CD4-positive, alpha-beta T cell (primary cell): ENCODE measurements at regions of chr15 and their contacts with region 1.

Region 1: GRCh38 chr15:101303408-101303807 is 8.4 kb upstream of the SNRPA1 start:
- DNase-seq: no peak
- ATAC-seq: no peak
- H3K4me3 ChIP-seq: no peak overlapping the region
- H3K4me3 Mint-ChIP-seq: no peak overlapping the region
- H3K27ac ChIP-seq: no peak overlapping the region
- H3K27ac Mint-ChIP-seq: no peak overlapping the region
- H3K4me1 ChIP-seq: no peaks in the 10 kb centered on the region
- H3K4me1 Mint-ChIP-seq: no peaks in the 10 kb centered on the region
- H3K27me3 ChIP-seq: peaks cover 0 to 1% of the 10 kb centered on the region in 2 experiments
- H3K27me3 Mint-ChIP-seq: no peaks in the 10 kb centered on the region
- CTCF ChIP-seq: no peak

Region 2: DNA sequence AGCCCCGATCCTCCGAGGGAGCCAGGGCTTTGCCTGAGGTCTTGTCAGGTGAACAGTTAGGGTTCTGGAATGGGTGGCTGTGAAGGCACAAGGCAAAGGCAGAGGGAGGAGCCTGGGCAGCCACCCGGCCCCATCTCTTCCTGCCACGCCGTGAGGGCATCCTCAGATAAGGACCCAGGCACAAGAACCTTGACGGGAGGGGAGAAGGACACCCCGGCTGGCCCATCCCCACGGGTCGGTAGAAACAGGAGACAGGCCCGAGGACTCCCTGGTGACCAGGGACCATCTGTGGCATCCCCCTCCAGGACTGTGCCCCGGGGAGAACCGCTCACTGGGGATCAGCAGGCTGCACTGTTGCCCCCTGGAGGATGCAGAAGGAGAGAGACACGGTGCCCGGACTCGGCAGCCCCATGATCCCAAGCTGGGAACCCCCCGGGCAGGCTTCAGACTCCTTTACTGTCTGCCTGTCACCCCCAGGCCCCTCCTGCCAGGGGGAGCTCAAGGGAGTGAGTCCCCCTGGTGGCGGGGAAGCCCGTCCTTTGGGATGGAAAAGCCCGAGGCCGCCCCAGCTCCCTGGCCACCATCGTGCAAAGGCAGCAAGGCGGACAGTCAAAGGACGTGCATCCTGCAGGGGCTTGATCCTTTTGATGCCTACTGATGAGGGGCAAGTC is 198.4 kb after region 1 on chr15:
- CTCF ChIA-PET with region 1: no interaction called
- POLR2A ChIA-PET with region 1: no interaction called
- intact Hi-C with region 1: loop called (anchors 2 kb)
- DNase-seq: peak in 13 of 14 experiments; percentile 7 to 63 (median 24)
- ATAC-seq: peak; percentile 70
- H3K4me3 ChIP-seq: no peak overlapping the region
- H3K4me3 Mint-ChIP-seq: peak overlapping the region; percentile 69
- H3K27ac ChIP-seq: no peak overlapping the region
- H3K27ac Mint-ChIP-seq: no peak overlapping the region
- H3K4me1 ChIP-seq: peaks cover 12% of the 10 kb centered on the region
- H3K4me1 Mint-ChIP-seq: peaks cover 11% of the 10 kb centered on the region
- H3K27me3 ChIP-seq: peaks cover 11% of the 10 kb centered on the region in 2 experiments
- H3K27me3 Mint-ChIP-seq: peaks cover 73% of the 10 kb centered on the region
- CTCF ChIP-seq: peak; percentile 36